ENCODE measurements at regions of chr7 and their contacts with region 1.

Region 1: GRCh38 chr7:30168835-30169573 is 34.2 kb downstream of the MTURN start:
- DNase-seq: peak; percentile 92
- H3K27ac ChIP-seq: peak overlapping the region; percentile 69
- CTCF ChIP-seq: no peak

Region 2: DNA sequence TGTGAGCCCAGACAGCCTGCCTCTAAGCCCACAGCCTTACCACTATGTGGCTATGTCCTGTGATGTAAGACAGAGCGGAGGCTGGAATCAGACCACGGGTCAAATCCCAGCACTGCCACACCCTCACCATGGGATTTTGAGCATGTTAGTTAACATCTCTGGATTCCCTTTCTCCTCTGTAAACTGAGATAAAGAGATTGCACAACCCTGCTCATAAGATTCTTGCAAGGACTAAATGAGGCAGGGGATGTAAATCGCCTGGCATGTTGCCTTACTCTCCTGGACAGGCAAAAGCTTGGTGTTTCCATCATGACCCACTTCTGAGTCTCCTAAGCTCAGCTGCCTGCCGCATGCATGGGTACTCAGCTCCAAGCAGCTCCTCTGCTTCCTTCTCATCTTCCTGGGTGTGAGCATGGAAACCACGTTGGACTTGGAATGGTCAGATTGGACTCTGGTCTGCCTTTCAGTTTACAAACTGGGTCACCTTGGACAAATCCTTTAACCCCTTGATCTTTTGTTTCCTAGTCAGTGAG is 75.5 kb before region 1 on chr7:
- CTCF ChIA-PET with region 1: interaction called, 10 read pairs
- POLR2A ChIA-PET with region 1: no interaction called
- DNase-seq: no peak
- H3K27ac ChIP-seq: no peak overlapping the region
- CTCF ChIP-seq: no peak